ENCODE measurements at regions of chr5 and their contacts with region 1.

Region 1: DNA sequence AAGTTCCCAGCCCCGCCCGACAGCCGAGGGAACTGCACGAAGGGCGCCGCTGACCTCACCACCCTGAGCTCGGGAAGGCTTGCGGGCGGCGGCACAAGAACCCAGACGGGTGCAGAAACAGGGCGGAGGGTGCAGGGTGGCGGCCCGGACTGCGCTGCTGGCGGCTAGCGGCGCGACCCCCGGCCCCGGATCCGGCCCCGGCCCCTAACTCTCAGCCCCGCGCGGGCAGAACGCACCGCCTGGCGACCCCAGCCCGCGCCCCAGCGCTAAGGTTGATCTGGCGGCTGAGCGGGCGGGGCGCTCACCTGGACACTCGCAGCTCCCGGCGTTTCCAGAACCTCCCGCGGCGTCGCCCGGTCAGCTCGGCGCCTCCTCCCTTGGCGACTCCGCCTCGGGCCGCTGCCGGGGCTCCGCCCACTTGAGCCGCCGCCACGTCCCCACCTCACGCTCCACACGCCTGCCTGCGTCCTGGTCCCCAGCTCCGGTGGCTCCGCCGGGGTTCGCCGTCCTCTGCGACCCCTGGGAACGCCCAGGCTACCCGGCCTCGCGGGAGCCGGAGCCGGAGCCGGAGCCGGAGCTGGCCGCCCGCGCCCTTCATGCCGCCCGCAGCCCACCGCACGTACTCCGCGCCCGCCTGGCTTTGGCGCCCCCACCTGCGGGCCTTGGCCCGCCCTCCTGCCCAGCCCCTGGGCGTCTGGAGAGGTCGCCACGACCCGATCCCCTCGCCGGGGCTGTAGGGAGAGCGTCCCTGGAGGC is at the start of gene P4HA2:
- DNase-seq: peak; percentile 91 to 96 (median 93)
- ATAC-seq: peak; percentile 98
- H3K4me3 ChIP-seq: peak within 1 kb of the TSS; percentile 76
- H3K27ac ChIP-seq: peak within 1 kb of the TSS; percentile 83
- H3K4me1 ChIP-seq: peaks cover 30 to 34% of the 10 kb centered on the region in 2 experiments
- H3K27me3 ChIP-seq: no peaks in the 10 kb centered on the region
- CTCF ChIP-seq: peak in 2 of 3 experiments; percentile 9 to 15; a peak in 2 of 6 replicates
- EP300 ChIP-seq: no peak
- POLR2A ChIP-seq: peak; percentile 71
- RAD21 ChIP-seq: no peak
- polyA plus RNA-seq, gene P4HA2: 17.9 to 29.2 TPM

Region 2: GRCh38 chr5:132215329-132215728 is 12.3 kb before region 1 on chr5:
- CTCF ChIA-PET with region 1: no interaction called
- POLR2A ChIA-PET with region 1: interaction called, 11 read pairs
- in situ Hi-C with region 1: no loop called
- intact Hi-C with region 1: no loop called
- DNase-seq: no peak
- ATAC-seq: peak; percentile 19; the same call in 1 of the 3 replicates
- H3K4me3 ChIP-seq: no peak overlapping the region
- H3K27ac ChIP-seq: no peak overlapping the region
- H3K4me1 ChIP-seq: peaks cover 0 to 7% of the 10 kb centered on the region in 2 experiments; a peak in 1 of 5 replicates
- H3K27me3 ChIP-seq: no peaks in the 10 kb centered on the region
- CTCF ChIP-seq: no peak
- EP300 ChIP-seq: no peak
- POLR2A ChIP-seq: no peak
- RAD21 ChIP-seq: no peak